CD4-positive, alpha-beta memory T cell (primary cell): ENCODE measurements at regions of chr2 and their contacts with region 1.

Region 1: GRCh38 chr2:191677646-191678436 is at the start of gene NABP1:
- DNase-seq: peak; percentile 98 to 99 (median 98)
- H3K4me3 ChIP-seq: peak within 1 kb of the TSS; percentile 88 to 97
- H3K4me3 Mint-ChIP-seq: peak within 1 kb of the TSS; percentile 90 to 100 (median 99)
- H3K27ac ChIP-seq: peak within 1 kb of the TSS; percentile 93
- H3K27ac Mint-ChIP-seq: peak within 1 kb of the TSS; percentile 97 to 100 (median 99)
- H3K4me1 ChIP-seq: peaks cover 66% of the 10 kb centered on the region
- H3K4me1 Mint-ChIP-seq: peaks cover 37 to 80% (median 52%) of the 10 kb centered on the region in 4 donors
- H3K27me3 ChIP-seq: no peaks in the 10 kb centered on the region
- H3K27me3 Mint-ChIP-seq: no peaks in the 10 kb centered on the region
- total RNA-seq, gene NABP1: 107 to 111 TPM

Region 2: GRCh38 chr2:189783927-189784867 is 1893.6 kb before region 1 on chr2 and contains the starts of genes ORMDL1 and PMS1:
- CTCF ChIA-PET with region 1: no interaction called
- POLR2A ChIA-PET with region 1: no interaction called
- intact Hi-C with region 1: loop called (anchors 5 kb)
- DNase-seq: peak; percentile 93 to 96 (median 96)
- H3K4me3 ChIP-seq: peak within 1 kb of the TSS; percentile 71 to 74
- H3K4me3 Mint-ChIP-seq: peak within 1 kb of the TSS; percentile 92 to 97 (median 94)
- H3K27ac ChIP-seq: peak within 1 kb of the TSS; percentile 93
- H3K27ac Mint-ChIP-seq: peak within 1 kb of the TSS; percentile 96 to 97 (median 97)
- H3K4me1 ChIP-seq: peaks cover 52% of the 10 kb centered on the region
- H3K4me1 Mint-ChIP-seq: peaks cover 43 to 64% (median 54%) of the 10 kb centered on the region in 4 donors
- H3K27me3 ChIP-seq: no peaks in the 10 kb centered on the region
- H3K27me3 Mint-ChIP-seq: no peaks in the 10 kb centered on the region
- total RNA-seq, gene ORMDL1: 187 to 190 TPM
- total RNA-seq, gene PMS1: 29.1 to 35.1 TPM

Region 3: DNA sequence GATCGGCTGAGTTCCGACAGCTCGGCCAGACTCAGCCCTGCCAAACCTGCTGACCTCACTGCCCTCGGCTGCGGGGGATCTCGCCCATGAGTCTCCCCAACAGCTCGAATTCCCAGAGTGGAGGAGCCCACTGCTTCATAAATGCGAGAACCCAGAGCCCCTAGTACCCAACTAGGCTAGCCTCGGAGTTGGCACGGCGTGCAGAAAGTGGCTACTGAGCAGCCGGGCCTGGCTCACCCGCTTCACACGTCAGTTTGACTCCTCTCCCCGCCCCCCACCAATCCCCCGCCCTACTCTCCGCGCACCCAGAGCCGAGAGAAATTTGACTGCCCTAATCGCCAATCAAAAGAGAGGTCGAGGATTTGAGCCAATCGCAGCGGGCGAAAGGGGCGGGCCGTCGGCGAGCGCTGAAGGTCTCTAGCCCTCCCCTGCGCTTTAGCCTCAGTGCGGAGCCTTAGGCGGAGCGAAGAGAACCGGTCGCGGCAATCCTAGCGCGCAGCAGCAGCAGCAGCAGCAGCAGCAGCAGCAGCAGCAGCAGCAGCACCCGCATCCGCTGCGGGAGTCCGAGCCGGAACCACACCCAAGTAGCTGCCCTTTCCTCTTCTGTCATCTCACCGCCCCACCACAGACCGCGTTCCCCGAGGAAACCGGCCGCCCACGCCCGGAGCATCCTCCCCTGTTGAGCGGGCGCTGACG is 797.3 kb before region 1 on chr2 and contains the start of gene GLS:
- CTCF ChIA-PET with region 1: no interaction called
- POLR2A ChIA-PET with region 1: interaction called, 24 read pairs
- intact Hi-C with region 1: loop called (anchors 1 kb)
- DNase-seq: peak; percentile 94 to 98 (median 97)
- H3K4me3 ChIP-seq: peak within 1 kb of the TSS; percentile 88 to 94
- H3K4me3 Mint-ChIP-seq: peak within 1 kb of the TSS; percentile 96 to 99 (median 98)
- H3K27ac ChIP-seq: peak within 1 kb of the TSS; percentile 93
- H3K27ac Mint-ChIP-seq: peak within 1 kb of the TSS; percentile 96 to 99 (median 99)
- H3K4me1 ChIP-seq: peaks cover 54% of the 10 kb centered on the region
- H3K4me1 Mint-ChIP-seq: peaks cover 33 to 72% (median 45%) of the 10 kb centered on the region in 4 donors
- H3K27me3 ChIP-seq: no peaks in the 10 kb centered on the region
- H3K27me3 Mint-ChIP-seq: no peaks in the 10 kb centered on the region
- total RNA-seq, gene GLS: 200 to 208 TPM

Region 4: GRCh38 chr2:191566344-191566743 is 111.5 kb before region 1 on chr2:
- CTCF ChIA-PET with region 1: interaction called, 46 read pairs
- POLR2A ChIA-PET with region 1: interaction called, 70 read pairs
- intact Hi-C with region 1: loop called (anchors 1 kb)
- DNase-seq: peak; percentile 47 to 63 (median 52)
- H3K4me3 ChIP-seq: no peak overlapping the region
- H3K4me3 Mint-ChIP-seq: no peak overlapping the region
- H3K27ac ChIP-seq: no peak overlapping the region
- H3K27ac Mint-ChIP-seq: no peak overlapping the region
- H3K4me1 ChIP-seq: peaks cover 19% of the 10 kb centered on the region
- H3K4me1 Mint-ChIP-seq: peaks cover 15 to 33% (median 25%) of the 10 kb centered on the region in 4 donors
- H3K27me3 ChIP-seq: peaks cover 3% of the 10 kb centered on the region
- H3K27me3 Mint-ChIP-seq: peaks cover 11 to 21% of the 10 kb centered on the region in 2 donors

Region 5: DNA sequence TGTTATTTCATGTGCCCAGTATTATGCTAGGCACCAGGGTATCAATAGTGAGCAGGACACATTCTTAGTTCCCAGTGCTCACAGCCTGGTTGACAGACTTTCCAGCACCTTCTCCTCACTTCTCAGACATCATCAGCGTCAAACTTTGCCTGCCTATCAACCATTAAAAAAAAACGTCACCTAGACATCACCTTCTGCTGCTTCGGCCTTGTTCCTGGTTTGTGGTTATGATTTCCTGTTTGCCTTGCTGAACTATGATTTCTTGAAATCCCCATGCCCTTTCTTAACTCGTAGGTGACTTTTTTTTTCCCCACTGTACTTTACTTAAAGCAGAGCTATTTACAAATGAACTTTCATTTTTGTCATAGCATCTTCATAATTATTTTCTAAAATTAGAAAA is 60.3 kb before region 1 on chr2:
- CTCF ChIA-PET with region 1: interaction called, 42 read pairs
- POLR2A ChIA-PET with region 1: interaction called, 602 read pairs
- intact Hi-C with region 1: loop called (anchors 1 kb)
- DNase-seq: peak; percentile 78 to 89 (median 85)
- H3K4me3 ChIP-seq: no peak overlapping the region
- H3K4me3 Mint-ChIP-seq: peak overlapping the region; percentile 5 to 83 (median 34)
- H3K27ac ChIP-seq: peak overlapping the region; percentile 82
- H3K27ac Mint-ChIP-seq: peak overlapping the region; percentile 88 to 97 (median 93)
- H3K4me1 ChIP-seq: peaks cover 47% of the 10 kb centered on the region
- H3K4me1 Mint-ChIP-seq: peaks cover 35 to 52% (median 45%) of the 10 kb centered on the region in 4 donors
- H3K27me3 ChIP-seq: no peaks in the 10 kb centered on the region
- H3K27me3 Mint-ChIP-seq: no peaks in the 10 kb centered on the region

Region 6: GRCh38 chr2:191642541-191642940 is 35.3 kb before region 1 on chr2:
- CTCF ChIA-PET with region 1: interaction called, 12 read pairs
- POLR2A ChIA-PET with region 1: interaction called, 194 read pairs
- intact Hi-C with region 1: loop called (anchors 1 kb)
- DNase-seq: no peak
- H3K4me3 ChIP-seq: no peak overlapping the region
- H3K4me3 Mint-ChIP-seq: no peak overlapping the region
- H3K27ac ChIP-seq: no peak overlapping the region
- H3K27ac Mint-ChIP-seq: peak overlapping the region in 2 of 7 donors; percentile 9 to 79
- H3K4me1 ChIP-seq: peaks cover 29% of the 10 kb centered on the region
- H3K4me1 Mint-ChIP-seq: peaks cover 24 to 44% (median 30%) of the 10 kb centered on the region in 4 donors
- H3K27me3 ChIP-seq: no peaks in the 10 kb centered on the region
- H3K27me3 Mint-ChIP-seq: no peaks in the 10 kb centered on the region

Region 7: DNA sequence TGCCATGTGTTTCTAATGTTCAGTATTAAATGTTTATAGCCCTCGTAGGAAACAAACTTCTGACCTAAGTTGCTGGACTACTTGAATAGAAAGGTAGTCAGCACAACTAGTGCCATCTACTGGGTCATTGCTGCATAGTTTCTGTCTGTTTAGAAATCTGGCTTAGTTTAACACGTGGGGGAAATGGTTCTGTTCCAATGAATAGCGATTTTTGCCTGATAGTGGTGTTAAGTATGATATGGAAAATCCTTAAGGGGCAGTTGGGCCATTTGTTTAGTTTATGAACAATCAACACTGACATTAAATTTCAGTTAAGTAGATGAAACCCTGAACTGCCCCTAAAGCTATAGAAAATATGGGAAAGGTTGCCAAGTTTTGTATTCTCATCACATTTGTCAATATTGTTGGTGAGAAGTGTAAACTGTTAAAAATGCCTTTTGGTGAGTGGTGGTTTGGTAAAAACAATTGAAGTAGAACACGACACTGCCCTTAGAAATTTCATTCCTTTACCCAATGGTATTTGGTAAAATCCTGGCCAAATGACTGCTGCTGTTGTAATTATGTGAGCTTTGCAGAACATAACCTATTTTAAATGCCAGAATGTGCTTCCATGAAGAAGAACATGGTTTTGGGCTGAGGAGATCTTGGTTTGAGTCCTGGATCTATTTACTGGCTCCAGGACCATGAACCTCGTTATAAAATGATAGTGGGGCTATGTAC is 13.3 kb after region 1 on chr2:
- CTCF ChIA-PET with region 1: interaction called, 18 read pairs
- POLR2A ChIA-PET with region 1: interaction called, 51 read pairs
- intact Hi-C with region 1: loop called (anchors 1 kb)
- DNase-seq: peak; percentile 61 to 67 (median 65)
- H3K4me3 ChIP-seq: no peak overlapping the region
- H3K4me3 Mint-ChIP-seq: no peak overlapping the region
- H3K27ac ChIP-seq: no peak overlapping the region
- H3K27ac Mint-ChIP-seq: peak overlapping the region; percentile 40 to 90 (median 73)
- H3K4me1 ChIP-seq: peaks cover 30% of the 10 kb centered on the region
- H3K4me1 Mint-ChIP-seq: peaks cover 20 to 46% (median 32%) of the 10 kb centered on the region in 4 donors
- H3K27me3 ChIP-seq: no peaks in the 10 kb centered on the region
- H3K27me3 Mint-ChIP-seq: no peaks in the 10 kb centered on the region

Region 8: DNA sequence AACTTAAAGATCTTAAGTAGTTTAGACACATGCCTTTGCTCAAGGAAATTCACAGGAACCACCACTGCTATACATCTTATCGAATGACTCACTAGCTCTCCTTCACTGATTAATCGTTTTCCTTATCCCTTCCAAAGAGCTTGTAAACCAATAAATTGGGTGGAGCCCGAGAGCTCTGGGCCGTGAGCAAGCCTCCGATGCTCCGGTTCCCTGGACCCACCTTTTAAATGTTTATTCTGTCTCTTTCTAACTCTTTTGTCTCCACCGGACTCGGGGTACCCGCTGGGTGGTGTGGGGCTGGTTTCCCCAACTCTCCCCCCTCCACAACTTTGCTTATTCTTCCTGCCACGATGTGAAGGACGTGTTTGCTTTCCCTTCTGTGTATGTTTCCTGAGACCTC is 809.8 kb after region 1 on chr2:
- CTCF ChIA-PET with region 1: no interaction called
- POLR2A ChIA-PET with region 1: no interaction called
- intact Hi-C with region 1: no loop called
- DNase-seq: no peak
- H3K4me3 ChIP-seq: no peak overlapping the region
- H3K4me3 Mint-ChIP-seq: no peak overlapping the region
- H3K27ac ChIP-seq: no peak overlapping the region
- H3K27ac Mint-ChIP-seq: no peak overlapping the region
- H3K4me1 ChIP-seq: no peaks in the 10 kb centered on the region
- H3K4me1 Mint-ChIP-seq: no peaks in the 10 kb centered on the region
- H3K27me3 ChIP-seq: no peaks in the 10 kb centered on the region
- H3K27me3 Mint-ChIP-seq: no peaks in the 10 kb centered on the region